ENCODE measurements at regions of chr5 and their contacts with region 1.

Region 1: DNA sequence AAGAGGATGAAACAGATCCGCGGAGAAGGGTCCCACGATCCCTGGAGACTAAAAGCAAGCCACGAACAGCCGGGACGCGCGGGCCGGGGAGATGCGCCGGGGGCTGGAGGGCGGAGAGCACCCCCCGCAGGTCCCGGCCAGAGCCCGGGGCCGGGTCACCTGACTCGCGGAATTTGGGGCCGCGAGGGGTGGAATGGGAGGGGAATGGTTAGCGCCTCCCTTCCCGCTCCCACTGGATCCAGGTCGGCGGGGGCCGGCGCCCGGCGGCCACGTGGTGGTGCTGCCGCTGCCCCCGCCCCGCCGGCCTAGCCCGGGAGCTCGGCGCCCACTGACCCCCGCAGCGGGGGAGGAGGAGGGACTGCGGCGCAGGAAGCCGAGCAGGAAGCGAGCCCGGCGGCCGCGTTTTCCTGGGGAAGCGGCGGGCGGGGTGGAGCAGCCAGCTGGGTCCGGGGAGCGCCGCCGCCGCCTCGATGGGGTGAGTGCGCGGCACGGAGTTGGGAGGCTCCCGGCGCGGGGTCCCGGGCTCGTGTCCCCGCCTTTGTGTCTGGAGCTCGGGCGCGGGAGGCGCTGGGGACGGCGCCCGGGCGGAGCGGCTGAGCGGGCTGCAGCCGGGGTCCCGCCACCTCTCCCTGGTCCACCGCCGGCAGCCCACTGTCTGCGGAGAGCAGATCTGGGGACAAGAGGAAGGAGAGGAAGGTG is at the start of gene RAI14:
- DNase-seq: peak; percentile 80
- H3K4me3 ChIP-seq: peak within 1 kb of the TSS; percentile 79 to 95 (median 83)
- H3K27ac ChIP-seq: peak within 1 kb of the TSS; percentile 68
- H3K4me1 ChIP-seq: peaks cover 16% of the 10 kb centered on the region
- H3K27me3 ChIP-seq: no peaks in the 10 kb centered on the region
- CTCF ChIP-seq: no peak
- total RNA-seq, gene RAI14: 114 to 184 TPM

Region 2: DNA sequence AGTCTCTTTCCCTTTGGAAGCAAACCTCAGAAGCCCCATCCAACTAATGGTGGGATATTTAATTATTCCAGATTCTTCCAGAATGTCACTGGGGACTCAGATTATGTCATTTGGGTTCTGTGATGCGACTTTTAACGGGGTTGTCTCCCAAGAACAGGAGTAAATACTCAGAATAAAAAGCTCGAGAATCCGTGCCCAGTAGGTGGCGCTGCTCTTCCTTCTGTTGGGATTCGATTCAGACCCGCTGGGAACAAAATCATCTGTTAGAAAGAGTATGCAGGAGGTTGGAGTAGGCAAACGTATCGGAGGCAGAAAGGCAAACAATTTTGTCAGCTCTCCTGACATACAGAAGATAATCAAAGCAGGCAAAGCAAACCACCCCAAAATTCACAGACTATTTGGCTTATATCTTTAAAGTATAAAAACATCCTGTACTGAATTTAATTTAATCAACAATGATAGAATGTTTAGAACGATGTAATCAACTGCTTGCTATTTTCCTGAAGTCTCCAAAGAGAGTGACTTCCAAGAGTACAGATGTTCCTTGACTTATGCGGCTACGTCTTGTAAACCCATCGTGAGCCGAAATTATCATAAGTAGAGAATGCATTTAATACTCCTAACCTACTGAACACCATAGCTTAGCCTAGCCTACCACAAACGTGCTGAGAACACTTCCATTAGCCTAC is 169.8 kb before region 1 on chr5:
- CTCF ChIA-PET with region 1: no interaction called
- dilution Hi-C with region 1: no loop called
- in situ Hi-C with region 1: no loop called
- intact Hi-C with region 1: loop called (anchors 1 kb)
- DNase-seq: peak; percentile 68
- H3K4me3 ChIP-seq: no peak overlapping the region
- H3K27ac ChIP-seq: no peak overlapping the region
- H3K4me1 ChIP-seq: peaks cover 23% of the 10 kb centered on the region
- H3K27me3 ChIP-seq: no peaks in the 10 kb centered on the region
- CTCF ChIP-seq: peak; percentile 85 to 88

Region 3: DNA sequence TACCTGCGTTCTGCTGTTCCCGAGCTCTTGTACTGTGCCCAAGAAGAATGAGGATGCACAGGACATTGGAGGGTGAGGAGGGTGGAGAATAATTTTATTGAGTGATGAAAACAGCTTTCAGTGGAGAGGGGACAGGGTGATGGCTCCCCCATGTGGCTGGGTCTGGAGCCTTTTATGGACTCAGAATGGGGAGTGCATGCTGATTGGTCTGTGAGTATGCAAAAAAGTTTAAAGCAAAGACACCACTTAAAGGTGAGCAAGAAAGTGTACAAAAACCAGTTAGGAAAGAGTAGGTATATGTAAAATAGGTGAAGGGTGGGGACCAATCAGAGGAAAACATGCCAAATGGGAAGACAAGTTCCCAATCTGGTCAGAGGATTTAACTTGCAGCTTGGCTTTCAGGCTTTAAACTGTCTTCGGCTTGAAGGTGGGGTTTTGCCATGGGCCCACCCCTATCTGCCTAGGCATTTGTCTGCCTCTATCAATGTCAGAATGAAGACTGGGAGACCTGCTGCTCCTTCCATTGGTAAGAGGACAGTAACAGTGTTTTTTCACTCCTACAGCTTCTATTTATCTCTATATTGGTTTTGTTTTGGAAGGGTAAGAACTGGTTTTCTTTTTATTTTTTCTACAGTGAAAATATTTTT is 118.0 kb before region 1 on chr5:
- CTCF ChIA-PET with region 1: interaction called, 3 read pairs
- dilution Hi-C with region 1: no loop called
- in situ Hi-C with region 1: no loop called
- intact Hi-C with region 1: loop called (anchors 5 kb)
- DNase-seq: peak; percentile 45
- H3K4me3 ChIP-seq: no peak overlapping the region
- H3K27ac ChIP-seq: no peak overlapping the region
- H3K4me1 ChIP-seq: peaks cover 19% of the 10 kb centered on the region
- H3K27me3 ChIP-seq: no peaks in the 10 kb centered on the region
- CTCF ChIP-seq: peak; percentile 28 to 61

Region 4: GRCh38 chr5:34563951-34564709 is 92.0 kb before region 1 on chr5:
- CTCF ChIA-PET with region 1: no interaction called
- dilution Hi-C with region 1: no loop called
- in situ Hi-C with region 1: no loop called
- intact Hi-C with region 1: no loop called
- DNase-seq: no peak
- H3K4me3 ChIP-seq: no peak overlapping the region
- H3K27ac ChIP-seq: no peak overlapping the region
- H3K4me1 ChIP-seq: no peaks in the 10 kb centered on the region
- H3K27me3 ChIP-seq: no peaks in the 10 kb centered on the region
- CTCF ChIP-seq: no peak

Region 5: DNA sequence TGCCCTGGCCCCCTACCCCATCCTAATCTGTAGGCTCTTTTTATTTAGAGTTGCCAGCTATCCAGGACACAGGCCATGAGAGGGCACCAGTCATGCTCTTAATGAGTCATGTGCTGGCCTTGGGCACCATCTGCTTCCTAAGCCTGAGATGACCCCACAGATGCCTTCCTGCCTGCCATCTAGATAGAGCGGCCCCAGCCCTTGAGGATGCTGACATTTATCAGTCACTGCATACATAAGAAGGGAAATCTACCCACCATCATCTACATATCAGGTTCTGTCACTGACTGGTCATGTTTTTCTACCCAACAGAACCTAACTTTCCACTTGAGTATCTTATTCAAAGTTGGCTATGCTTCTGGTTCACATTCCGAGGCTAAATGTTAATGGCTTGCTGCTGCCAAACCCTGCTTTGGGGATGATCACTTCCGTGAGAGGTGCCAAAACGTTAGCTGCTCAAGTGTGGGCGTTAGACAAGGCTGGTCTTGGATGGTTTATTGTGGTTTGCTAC is 132.9 kb after region 1 on chr5:
- CTCF ChIA-PET with region 1: no interaction called
- dilution Hi-C with region 1: no loop called
- in situ Hi-C with region 1: no loop called
- intact Hi-C with region 1: loop called (anchors 2 kb)
- DNase-seq: peak; percentile 8
- H3K4me3 ChIP-seq: no peak overlapping the region
- H3K27ac ChIP-seq: no peak overlapping the region
- H3K4me1 ChIP-seq: peaks cover 6% of the 10 kb centered on the region
- H3K27me3 ChIP-seq: no peaks in the 10 kb centered on the region
- CTCF ChIP-seq: no peak

Region 6: GRCh38 chr5:34898258-34898895 is 242.2 kb after region 1 on chr5:
- CTCF ChIA-PET with region 1: no interaction called
- dilution Hi-C with region 1: no loop called
- in situ Hi-C with region 1: no loop called
- intact Hi-C with region 1: loop called (anchors 1 kb)
- DNase-seq: peak; percentile 43
- H3K4me3 ChIP-seq: no peak overlapping the region
- H3K27ac ChIP-seq: no peak overlapping the region
- H3K4me1 ChIP-seq: no peaks in the 10 kb centered on the region
- H3K27me3 ChIP-seq: no peaks in the 10 kb centered on the region
- CTCF ChIP-seq: peak; percentile 87 to 90